Upper lobe of right lung (tissue), 1 donor: ENCODE measurements at regions of chr2 and their contacts with region 1.

Region 1: DNA sequence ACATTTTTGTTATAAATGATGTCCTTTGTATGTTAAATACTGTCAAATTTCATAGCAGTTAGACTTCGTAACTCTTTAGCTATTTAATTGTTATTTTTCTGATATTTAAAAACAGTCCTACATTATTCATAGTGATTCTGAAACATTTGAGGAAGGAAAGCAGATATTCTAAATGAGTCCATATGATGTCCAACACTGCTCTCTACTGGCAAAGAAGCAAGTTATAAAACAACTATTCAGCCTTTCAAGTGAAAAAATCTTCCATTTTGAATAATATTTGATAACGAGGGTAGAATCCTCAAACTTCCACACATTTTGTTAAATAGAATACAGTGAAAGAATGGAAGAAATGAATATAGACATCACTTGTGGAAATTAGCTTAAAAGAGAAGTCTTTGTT is 220.8 kb downstream of the GULP1 start:
- DNase-seq: no peak
- ATAC-seq: peak; percentile 50
- H3K4me3 ChIP-seq: no peak overlapping the region
- H3K27ac ChIP-seq: no peak overlapping the region
- H3K4me1 ChIP-seq: no peaks in the 10 kb centered on the region
- H3K27me3 ChIP-seq: no peaks in the 10 kb centered on the region
- CTCF ChIP-seq: peak; percentile 47

Region 2: GRCh38 chr2:188089901-188090300 is 422.6 kb before region 1 on chr2:
- intact Hi-C with region 1: no loop called
- DNase-seq: no peak
- ATAC-seq: no peak
- H3K4me3 ChIP-seq: no peak overlapping the region
- H3K27ac ChIP-seq: no peak overlapping the region
- H3K4me1 ChIP-seq: no peaks in the 10 kb centered on the region
- H3K27me3 ChIP-seq: no peaks in the 10 kb centered on the region
- CTCF ChIP-seq: no peak

Region 3: GRCh38 chr2:188181067-188181838 is 331.2 kb before region 1 on chr2:
- intact Hi-C with region 1: no loop called
- DNase-seq: no peak
- ATAC-seq: no peak
- H3K4me3 ChIP-seq: no peak overlapping the region
- H3K27ac ChIP-seq: no peak overlapping the region
- H3K4me1 ChIP-seq: no peaks in the 10 kb centered on the region
- H3K27me3 ChIP-seq: no peaks in the 10 kb centered on the region
- CTCF ChIP-seq: no peak

Region 4: GRCh38 chr2:189412330-189412953 is 900.0 kb after region 1 on chr2:
- intact Hi-C with region 1: loop called (anchors 10 kb)
- DNase-seq: no peak
- ATAC-seq: peak; percentile 75
- H3K4me3 ChIP-seq: no peak overlapping the region
- H3K27ac ChIP-seq: no peak overlapping the region
- H3K4me1 ChIP-seq: no peaks in the 10 kb centered on the region
- H3K27me3 ChIP-seq: no peaks in the 10 kb centered on the region
- CTCF ChIP-seq: peak; percentile 81